Endothelial cell of umbilical vein (primary cell): ENCODE measurements at regions of chr4 and their contacts with region 1.

Region 1: GRCh38 chr4:129883996-129884395 is 788.0 kb downstream of the C4orf33 start:
- DNase-seq: no peak
- H3K4me3 ChIP-seq: no peak overlapping the region
- H3K27ac ChIP-seq: no peak overlapping the region
- H3K4me1 ChIP-seq: no peaks in the 10 kb centered on the region
- H3K27me3 ChIP-seq: no peaks in the 10 kb centered on the region
- CTCF ChIP-seq: no peak
- POLR2A ChIP-seq: no peak

Region 2: GRCh38 chr4:129852434-129852833 is 31.6 kb before region 1 on chr4:
- CTCF ChIA-PET with region 1: no interaction called
- POLR2A ChIA-PET with region 1: no interaction called
- dilution Hi-C with region 1: no loop called
- intact Hi-C with region 1: no loop called
- DNase-seq: no peak
- H3K4me3 ChIP-seq: no peak overlapping the region
- H3K27ac ChIP-seq: no peak overlapping the region
- H3K4me1 ChIP-seq: no peaks in the 10 kb centered on the region
- H3K27me3 ChIP-seq: no peaks in the 10 kb centered on the region
- CTCF ChIP-seq: no peak
- POLR2A ChIP-seq: no peak

Region 3: DNA sequence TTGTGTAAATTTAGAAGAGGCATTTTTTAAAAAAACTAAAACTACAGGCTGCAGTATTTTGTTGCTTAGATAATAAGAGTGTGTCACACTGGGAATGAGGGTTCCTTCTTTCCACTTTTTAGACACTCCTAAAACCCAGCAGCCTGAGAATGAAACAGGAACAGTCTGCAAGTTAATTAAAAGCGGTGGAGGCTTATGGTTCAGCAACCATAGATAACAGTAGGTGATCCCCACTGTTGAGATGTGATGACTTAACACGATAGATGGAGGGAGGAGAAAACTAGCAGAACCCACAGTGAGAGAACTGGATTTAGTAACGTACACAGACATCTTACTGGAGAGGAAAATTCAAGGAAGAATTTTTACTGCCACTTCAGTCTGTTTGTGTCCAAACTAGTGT is 20.8 kb before region 1 on chr4:
- CTCF ChIA-PET with region 1: no interaction called
- POLR2A ChIA-PET with region 1: no interaction called
- dilution Hi-C with region 1: no loop called
- intact Hi-C with region 1: loop called (anchors 2 kb)
- DNase-seq: no peak
- H3K4me3 ChIP-seq: no peak overlapping the region
- H3K27ac ChIP-seq: no peak overlapping the region
- H3K4me1 ChIP-seq: no peaks in the 10 kb centered on the region
- H3K27me3 ChIP-seq: no peaks in the 10 kb centered on the region
- CTCF ChIP-seq: no peak
- POLR2A ChIP-seq: no peak

Region 4: GRCh38 chr4:130257271-130257670 is 373.3 kb after region 1 on chr4:
- CTCF ChIA-PET with region 1: no interaction called
- POLR2A ChIA-PET with region 1: no interaction called
- dilution Hi-C with region 1: no loop called
- intact Hi-C with region 1: no loop called
- DNase-seq: peak; percentile 67
- H3K4me3 ChIP-seq: no peak overlapping the region
- H3K27ac ChIP-seq: no peak overlapping the region
- H3K4me1 ChIP-seq: peaks cover 6% of the 10 kb centered on the region
- H3K27me3 ChIP-seq: no peaks in the 10 kb centered on the region
- CTCF ChIP-seq: no peak
- POLR2A ChIP-seq: no peak